ENCODE measurements at regions of chr1 and their contacts with region 1.

Region 1: GRCh38 chr1:29944253-29944905 is 708.1 kb downstream of the PTPRU start:
- DNase-seq: no peak
- H3K4me3 ChIP-seq: no peak overlapping the region
- H3K27ac ChIP-seq: no peak overlapping the region
- H3K4me1 ChIP-seq: no peaks in the 10 kb centered on the region
- H3K27me3 ChIP-seq: peaks cover 4% of the 10 kb centered on the region
- CTCF ChIP-seq: no peak

Region 2: DNA sequence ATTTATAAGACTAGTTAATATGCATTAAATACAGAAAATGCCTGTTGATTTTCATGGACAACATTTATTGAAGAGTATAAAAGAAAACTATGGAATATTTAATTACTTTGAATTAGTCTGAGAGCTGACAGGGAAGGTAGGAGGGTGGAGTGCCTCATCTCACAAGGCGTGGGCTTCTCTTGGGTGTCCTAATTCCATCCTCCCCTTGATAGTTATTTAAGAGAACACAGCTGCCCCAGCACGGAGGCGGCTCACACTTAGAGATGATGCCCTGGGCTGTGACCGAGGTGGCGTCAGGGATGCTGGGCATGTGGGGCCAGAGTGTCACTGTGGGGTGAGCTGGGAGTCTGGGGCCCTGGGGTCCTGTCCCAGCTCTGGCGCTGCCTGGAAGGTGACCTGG is 215.1 kb before region 1 on chr1:
- CTCF ChIA-PET with region 1: no interaction called
- dilution Hi-C with region 1: no loop called
- in situ Hi-C with region 1: no loop called
- intact Hi-C with region 1: no loop called
- DNase-seq: no peak
- H3K4me3 ChIP-seq: no peak overlapping the region
- H3K27ac ChIP-seq: no peak overlapping the region
- H3K4me1 ChIP-seq: no peaks in the 10 kb centered on the region
- H3K27me3 ChIP-seq: no peaks in the 10 kb centered on the region
- CTCF ChIP-seq: no peak

Region 3: GRCh38 chr1:29824511-29825273 is 119.7 kb before region 1 on chr1:
- CTCF ChIA-PET with region 1: no interaction called
- dilution Hi-C with region 1: no loop called
- in situ Hi-C with region 1: no loop called
- intact Hi-C with region 1: no loop called
- DNase-seq: no peak
- H3K4me3 ChIP-seq: no peak overlapping the region
- H3K27ac ChIP-seq: no peak overlapping the region
- H3K4me1 ChIP-seq: peaks cover 3% of the 10 kb centered on the region
- H3K27me3 ChIP-seq: no peaks in the 10 kb centered on the region
- CTCF ChIP-seq: no peak

Region 4: GRCh38 chr1:29839726-29840125 is 104.7 kb before region 1 on chr1:
- CTCF ChIA-PET with region 1: no interaction called
- dilution Hi-C with region 1: loop called (anchors 5 kb)
- in situ Hi-C with region 1: no loop called
- intact Hi-C with region 1: no loop called
- DNase-seq: no peak
- H3K4me3 ChIP-seq: no peak overlapping the region
- H3K27ac ChIP-seq: no peak overlapping the region
- H3K4me1 ChIP-seq: no peaks in the 10 kb centered on the region
- H3K27me3 ChIP-seq: peaks cover 4% of the 10 kb centered on the region
- CTCF ChIP-seq: no peak

Region 5: GRCh38 chr1:29870621-29871020 is 73.8 kb before region 1 on chr1:
- CTCF ChIA-PET with region 1: no interaction called
- dilution Hi-C with region 1: loop called (anchors 5 kb)
- in situ Hi-C with region 1: no loop called
- intact Hi-C with region 1: no loop called
- DNase-seq: no peak
- H3K4me3 ChIP-seq: no peak overlapping the region
- H3K27ac ChIP-seq: no peak overlapping the region
- H3K4me1 ChIP-seq: peaks cover 9% of the 10 kb centered on the region
- H3K27me3 ChIP-seq: no peaks in the 10 kb centered on the region
- CTCF ChIP-seq: no peak

Region 6: DNA sequence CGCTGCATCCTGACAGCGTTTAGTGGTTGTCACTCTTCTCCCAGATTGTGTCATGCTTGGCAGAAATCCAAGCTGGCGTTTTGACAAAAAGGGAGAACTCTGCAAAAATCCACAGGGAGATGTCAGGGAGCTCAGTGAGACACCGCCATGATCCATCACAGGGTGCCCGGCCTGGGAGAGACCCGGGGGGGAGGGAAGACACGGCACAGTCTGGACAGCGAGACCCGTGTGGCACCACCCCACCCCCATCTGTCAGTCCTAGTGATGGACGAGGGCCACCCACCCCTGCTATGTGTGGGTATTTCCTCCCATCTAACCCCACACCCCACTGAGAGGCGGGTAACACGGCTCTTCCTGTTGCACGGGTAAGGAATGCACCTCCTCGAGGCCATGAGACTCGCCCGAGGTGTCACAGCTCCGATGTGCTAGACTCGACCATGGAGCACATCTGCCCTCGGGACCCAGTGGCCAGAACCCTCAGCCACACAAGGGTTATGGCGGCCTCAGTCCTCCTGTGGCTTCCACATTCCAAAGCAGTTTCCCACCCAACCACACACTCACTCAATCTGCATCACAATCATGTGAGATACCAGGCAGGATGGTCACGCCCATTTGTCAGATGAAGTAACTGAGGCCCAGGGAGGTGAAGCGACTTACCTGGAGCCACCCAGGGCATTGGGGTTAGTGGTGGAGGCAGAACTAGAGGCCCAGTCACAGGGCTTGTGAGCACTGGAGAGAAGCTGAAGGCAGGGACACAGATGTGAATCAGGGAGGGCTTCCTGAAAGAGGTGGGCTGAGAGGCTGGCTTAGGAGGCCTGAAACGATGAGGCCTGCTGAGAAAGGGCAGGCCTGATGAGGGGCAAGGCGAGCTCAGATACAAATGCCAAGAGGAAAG is 90.5 kb after region 1 on chr1:
- CTCF ChIA-PET with region 1: no interaction called
- dilution Hi-C with region 1: loop called (anchors 5 kb)
- in situ Hi-C with region 1: no loop called
- intact Hi-C with region 1: no loop called
- DNase-seq: no peak
- H3K4me3 ChIP-seq: no peak overlapping the region
- H3K27ac ChIP-seq: no peak overlapping the region
- H3K4me1 ChIP-seq: no peaks in the 10 kb centered on the region
- H3K27me3 ChIP-seq: no peaks in the 10 kb centered on the region
- CTCF ChIP-seq: no peak